ENCODE measurements at regions of chr5 and their contacts with region 1.

Region 1: DNA sequence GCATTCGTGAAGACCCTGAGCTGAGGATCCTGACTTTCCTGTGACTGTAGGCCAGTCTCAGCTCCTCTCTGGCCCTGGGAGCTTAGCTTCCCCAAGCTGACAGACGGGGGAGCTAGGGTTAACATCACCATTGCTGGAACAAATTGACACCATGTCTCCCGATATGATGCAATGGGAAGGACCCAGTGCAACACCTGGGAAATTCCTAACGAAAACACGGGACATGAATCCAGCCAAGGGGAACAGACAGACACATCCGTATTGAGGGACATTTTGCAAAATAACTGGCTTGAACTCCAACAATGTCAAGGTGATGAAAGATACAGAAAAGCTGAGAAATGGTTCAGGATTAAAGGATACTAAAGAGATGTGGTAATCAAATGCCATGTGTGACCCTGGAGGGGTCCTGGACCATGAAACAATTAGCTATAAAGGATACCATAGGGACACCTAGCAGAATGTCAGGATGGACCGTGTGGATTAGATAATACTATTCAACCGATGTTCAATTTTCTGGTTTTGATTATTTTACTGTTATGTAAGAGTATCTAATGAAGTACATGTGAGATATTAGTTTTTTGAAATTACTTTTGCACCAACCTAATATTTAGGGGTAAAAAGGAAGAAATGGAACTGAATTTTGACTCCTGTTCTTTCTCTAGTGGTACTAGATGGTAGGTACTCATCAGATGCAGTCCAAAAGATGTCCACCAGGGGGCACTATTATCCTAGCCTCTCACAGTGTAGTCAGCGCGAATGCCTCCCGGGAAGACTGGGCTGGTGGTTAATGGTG is 52.7 kb downstream of the NDST1 start:
- DNase-seq: peak; percentile 82
- H3K4me3 ChIP-seq: no peak overlapping the region; a peak in 1 of 4 replicates
- H3K27ac ChIP-seq: no peak overlapping the region
- H3K4me1 ChIP-seq: peaks cover 6 to 13% of the 10 kb centered on the region in 2 experiments; a peak in 2 of 4 replicates
- H3K27me3 ChIP-seq: no peaks in the 10 kb centered on the region
- CTCF ChIP-seq: peak; percentile 87
- EP300 ChIP-seq: no peak
- RAD21 ChIP-seq: peak; percentile 98

Region 2: DNA sequence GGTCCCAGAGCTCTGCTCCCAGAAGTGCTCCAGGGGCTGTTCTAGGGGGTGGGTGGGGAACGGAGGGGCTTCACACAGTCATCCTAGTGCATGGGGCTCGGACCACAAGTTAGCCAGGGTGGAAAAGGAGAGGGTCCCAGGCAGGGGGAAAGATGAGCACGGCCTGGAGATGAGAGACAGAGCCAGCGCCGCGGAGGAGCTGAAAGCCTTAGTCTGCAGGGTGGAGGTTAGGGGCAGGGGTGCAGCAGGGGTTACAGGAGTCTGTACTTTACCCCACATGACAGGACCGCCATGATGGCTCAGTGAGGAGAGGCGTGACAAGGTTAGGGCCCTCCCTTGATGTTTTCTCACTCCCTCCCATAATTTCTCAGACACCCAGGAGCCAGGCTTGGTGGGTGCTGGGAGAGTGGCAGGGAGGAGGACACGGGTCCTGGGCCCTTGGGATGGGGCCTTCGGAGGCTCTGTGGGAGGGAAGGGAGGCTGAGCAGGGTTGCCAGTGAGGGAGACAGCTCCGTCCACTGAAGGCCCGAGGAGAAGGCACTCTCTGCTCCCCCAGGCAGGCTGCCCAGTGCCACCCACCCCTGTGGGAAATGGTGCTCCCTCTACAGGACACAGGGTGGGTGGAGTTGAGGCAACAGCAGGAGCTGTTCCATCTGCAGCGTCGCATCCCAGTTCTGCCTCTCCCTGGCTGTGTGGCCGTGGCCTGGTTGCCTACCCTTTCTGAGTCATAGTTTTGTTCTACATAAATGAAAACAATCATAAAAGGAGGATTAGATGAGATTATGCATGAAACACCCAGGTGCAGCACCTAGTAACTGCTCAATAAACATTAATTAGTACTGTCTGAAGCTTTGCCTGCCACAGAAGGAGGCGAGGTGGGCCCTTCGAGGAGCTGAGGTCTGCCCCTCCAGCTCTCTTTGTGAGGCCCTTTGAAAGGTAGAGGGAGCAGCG is 13.5 kb after region 1 on chr5:
- CTCF ChIA-PET with region 1: interaction called, 26 read pairs
- POLR2A ChIA-PET with region 1: no interaction called
- DNase-seq: peak; percentile 59
- H3K4me3 ChIP-seq: no peak overlapping the region
- H3K27ac ChIP-seq: peak overlapping the region in 1 of 2 experiments; percentile 99; a peak in 2 of 4 replicates
- H3K4me1 ChIP-seq: peaks cover 8 to 61% of the 10 kb centered on the region in 2 experiments; a peak in 3 of 4 replicates
- H3K27me3 ChIP-seq: no peaks in the 10 kb centered on the region
- CTCF ChIP-seq: peak; percentile 30
- EP300 ChIP-seq: no peak
- RAD21 ChIP-seq: no peak

Region 3: DNA sequence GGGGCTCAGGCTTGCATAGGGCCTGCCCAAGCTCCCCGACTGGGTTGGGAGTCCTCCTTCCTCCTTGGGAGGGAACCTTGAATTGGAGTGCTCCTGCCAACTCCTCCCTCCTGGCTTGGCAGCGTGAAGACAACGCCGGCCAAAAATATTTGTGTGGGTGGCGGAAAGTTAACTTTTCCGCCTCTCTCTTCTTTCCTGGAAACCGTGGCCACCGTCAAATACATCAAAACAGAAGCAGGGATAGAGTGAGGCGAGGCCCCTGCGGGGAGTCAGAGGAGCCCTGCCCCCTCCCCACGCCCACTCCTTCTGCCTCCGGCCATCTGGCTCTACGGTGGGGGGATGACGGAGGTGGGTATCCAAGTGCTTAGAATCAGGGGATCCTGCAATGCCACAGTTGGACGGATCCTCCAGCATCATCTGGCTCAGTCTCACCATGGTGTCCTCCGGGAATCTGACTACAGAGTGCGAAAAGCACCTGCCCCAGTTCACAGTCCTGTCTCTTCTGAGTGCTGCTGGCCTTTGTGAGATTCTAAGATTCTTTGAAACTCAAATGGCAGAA is 54.6 kb after region 1 on chr5:
- CTCF ChIA-PET with region 1: interaction called, 14 read pairs
- POLR2A ChIA-PET with region 1: interaction called, 3 read pairs
- DNase-seq: no peak
- H3K4me3 ChIP-seq: no peak overlapping the region
- H3K27ac ChIP-seq: peak overlapping the region in 1 of 2 experiments; percentile 86; a peak in 2 of 4 replicates
- H3K4me1 ChIP-seq: peaks cover 0 to 82% of the 10 kb centered on the region in 2 experiments; a peak in 3 of 4 replicates
- H3K27me3 ChIP-seq: no peaks in the 10 kb centered on the region
- CTCF ChIP-seq: no peak
- EP300 ChIP-seq: no peak
- RAD21 ChIP-seq: no peak

Region 4: DNA sequence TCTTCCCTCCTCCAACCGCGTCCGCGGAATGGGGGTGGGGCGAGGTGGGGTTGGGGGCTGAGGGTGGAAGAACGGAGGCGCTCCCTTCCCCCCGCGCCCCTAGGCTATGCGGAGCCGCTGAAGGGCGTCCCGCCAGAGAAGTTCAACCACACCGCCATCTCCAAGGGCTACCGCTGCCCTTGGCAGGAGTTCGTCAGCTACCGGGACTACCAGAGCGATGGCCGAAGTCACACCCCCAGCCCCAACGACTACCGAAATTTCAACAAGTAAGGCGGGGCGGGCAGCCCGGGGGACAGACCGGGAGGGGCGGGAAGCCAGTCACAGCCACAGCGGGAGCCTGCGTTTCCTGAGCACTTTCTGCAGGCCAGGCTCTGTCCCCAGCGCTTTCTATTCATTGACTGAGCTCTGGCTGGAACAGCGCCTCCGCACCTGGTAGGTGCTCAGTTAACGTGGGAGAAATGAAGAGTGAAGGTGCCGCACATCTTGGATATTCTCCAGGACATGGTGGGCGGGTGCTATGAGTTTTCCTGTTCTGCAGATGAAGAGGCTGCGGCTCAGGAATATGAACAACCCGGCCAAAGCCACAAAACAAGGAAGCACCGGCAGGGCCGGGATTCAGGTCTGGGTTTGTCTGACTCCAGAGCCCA is 111.8 kb after region 1 on chr5:
- CTCF ChIA-PET with region 1: interaction called, 32 read pairs
- POLR2A ChIA-PET with region 1: no interaction called
- DNase-seq: peak; percentile 83
- H3K4me3 ChIP-seq: peak overlapping the region; percentile 39 to 49
- H3K27ac ChIP-seq: no peak overlapping the region
- H3K4me1 ChIP-seq: peaks cover 13 to 23% of the 10 kb centered on the region in 2 experiments; a peak in 2 of 4 replicates
- H3K27me3 ChIP-seq: no peaks in the 10 kb centered on the region
- CTCF ChIP-seq: no peak
- EP300 ChIP-seq: no peak
- RAD21 ChIP-seq: no peak

Region 5: GRCh38 chr5:150778517-150779396 is 218.2 kb after region 1 on chr5 and contains the start of gene SMIM3:
- CTCF ChIA-PET with region 1: interaction called, 51 read pairs
- POLR2A ChIA-PET with region 1: interaction called, 3 read pairs
- DNase-seq: peak; percentile 86
- H3K4me3 ChIP-seq: peak within 1 kb of the TSS; percentile 85 to 91
- H3K27ac ChIP-seq: peak within 1 kb of the TSS; percentile 81 to 83
- H3K4me1 ChIP-seq: peaks cover 16 to 50% of the 10 kb centered on the region in 2 experiments; a peak in 3 of 4 replicates
- H3K27me3 ChIP-seq: no peaks in the 10 kb centered on the region
- CTCF ChIP-seq: peak; percentile 60
- EP300 ChIP-seq: peak in 1 of 2 experiments; percentile 50; a peak in 1 of 4 replicates
- RAD21 ChIP-seq: peak; percentile 80
- polyA plus RNA-seq, gene SMIM3: 39.9 and 44.8 TPM in 2 replicates

Region 6: GRCh38 chr5:151075698-151076331 is 515.2 kb after region 1 on chr5:
- CTCF ChIA-PET with region 1: no interaction called
- POLR2A ChIA-PET with region 1: no interaction called
- DNase-seq: no peak
- H3K4me3 ChIP-seq: no peak overlapping the region
- H3K27ac ChIP-seq: peak overlapping the region in 1 of 2 experiments; percentile 37; a peak in 2 of 4 replicates
- H3K4me1 ChIP-seq: peaks cover 5 to 19% of the 10 kb centered on the region in 2 experiments
- H3K27me3 ChIP-seq: no peaks in the 10 kb centered on the region
- CTCF ChIP-seq: no peak
- EP300 ChIP-seq: no peak
- RAD21 ChIP-seq: no peak